ENCODE measurements at regions of chr7 and their contacts with region 1.

Region 1: GRCh38 chr7:139602143-139602722 is 78.7 kb downstream of the CLEC2L start:
- DNase-seq: no peak
- ATAC-seq: peak; percentile 83
- H3K4me3 Mint-ChIP-seq: no peak overlapping the region
- H3K27ac Mint-ChIP-seq: no peak overlapping the region
- H3K4me1 Mint-ChIP-seq: no peaks in the 10 kb centered on the region
- H3K27me3 Mint-ChIP-seq: no peaks in the 10 kb centered on the region

Region 2: DNA sequence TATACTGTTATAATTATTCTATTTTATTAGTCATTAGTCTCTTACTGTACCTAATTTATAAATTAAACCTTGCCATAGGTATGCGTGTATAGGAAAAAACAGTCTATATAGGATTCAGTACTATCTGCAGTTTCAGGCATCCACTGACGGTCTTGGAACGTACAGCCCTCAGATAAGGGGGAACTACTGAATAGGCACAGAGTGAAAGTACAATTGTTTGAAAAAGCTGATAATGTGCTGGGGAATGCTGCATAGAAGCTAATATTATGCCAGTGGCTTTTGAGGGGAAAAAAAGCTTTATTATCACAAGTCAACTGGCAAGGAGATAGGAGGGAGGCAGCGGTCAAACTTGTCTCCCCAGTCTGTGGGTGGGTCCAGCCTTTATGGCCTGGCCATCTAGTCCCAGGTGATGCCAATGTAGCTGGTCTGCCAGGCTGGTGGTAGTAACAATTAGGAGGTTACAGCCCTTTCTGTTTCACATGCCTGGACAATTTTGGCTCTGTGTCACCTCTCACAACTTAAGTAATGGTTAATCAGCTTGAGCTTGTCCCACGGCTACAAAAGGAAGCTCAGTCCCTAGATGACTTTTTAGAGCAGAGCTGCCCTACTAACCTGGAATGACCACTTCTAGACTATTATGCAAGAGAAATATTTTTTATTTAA is 269.4 kb before region 1 on chr7:
- CTCF ChIA-PET with region 1: no interaction called
- POLR2A ChIA-PET with region 1: no interaction called
- intact Hi-C with region 1: no loop called
- DNase-seq: no peak
- ATAC-seq: no peak
- H3K4me3 Mint-ChIP-seq: no peak overlapping the region
- H3K27ac Mint-ChIP-seq: no peak overlapping the region
- H3K4me1 Mint-ChIP-seq: peaks cover 13% of the 10 kb centered on the region
- H3K27me3 Mint-ChIP-seq: no peaks in the 10 kb centered on the region

Region 3: GRCh38 chr7:139393621-139394211 is 208.5 kb before region 1 on chr7:
- CTCF ChIA-PET with region 1: no interaction called
- POLR2A ChIA-PET with region 1: no interaction called
- intact Hi-C with region 1: no loop called
- DNase-seq: no peak
- ATAC-seq: peak; percentile 65
- H3K4me3 Mint-ChIP-seq: no peak overlapping the region
- H3K27ac Mint-ChIP-seq: no peak overlapping the region
- H3K4me1 Mint-ChIP-seq: peaks cover 46% of the 10 kb centered on the region
- H3K27me3 Mint-ChIP-seq: no peaks in the 10 kb centered on the region

Region 4: DNA sequence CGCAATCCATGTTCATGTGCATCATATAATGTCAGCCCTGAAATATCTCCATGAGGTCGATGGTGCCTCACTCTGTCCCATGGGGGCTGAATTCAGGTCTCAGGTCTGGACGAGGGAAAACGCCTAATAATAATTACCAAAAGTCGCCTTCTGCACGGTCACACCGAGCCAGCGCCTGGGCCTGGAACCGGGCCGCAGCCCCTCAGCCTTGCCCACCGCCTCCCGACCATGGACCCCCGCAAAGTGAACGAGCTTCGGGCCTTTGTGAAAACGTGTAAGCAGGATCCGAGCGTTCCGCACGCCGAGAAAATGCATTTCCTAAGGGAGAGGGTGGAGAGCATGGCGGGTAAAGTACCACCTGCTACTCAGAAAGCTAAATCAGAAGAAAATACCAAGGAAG is 100.0 kb before region 1 on chr7:
- CTCF ChIA-PET with region 1: interaction called, 11 read pairs
- POLR2A ChIA-PET with region 1: no interaction called
- intact Hi-C with region 1: no loop called
- DNase-seq: no peak
- ATAC-seq: no peak
- H3K4me3 Mint-ChIP-seq: no peak overlapping the region
- H3K27ac Mint-ChIP-seq: no peak overlapping the region
- H3K4me1 Mint-ChIP-seq: peaks cover 4% of the 10 kb centered on the region
- H3K27me3 Mint-ChIP-seq: peaks cover 2% of the 10 kb centered on the region

Region 5: GRCh38 chr7:139591550-139592195 is 10.6 kb before region 1 on chr7:
- CTCF ChIA-PET with region 1: interaction called, 11 read pairs
- POLR2A ChIA-PET with region 1: no interaction called
- intact Hi-C with region 1: no loop called
- DNase-seq: no peak
- ATAC-seq: no peak
- H3K4me3 Mint-ChIP-seq: no peak overlapping the region
- H3K27ac Mint-ChIP-seq: no peak overlapping the region
- H3K4me1 Mint-ChIP-seq: peaks cover 3% of the 10 kb centered on the region
- H3K27me3 Mint-ChIP-seq: no peaks in the 10 kb centered on the region

Region 6: DNA sequence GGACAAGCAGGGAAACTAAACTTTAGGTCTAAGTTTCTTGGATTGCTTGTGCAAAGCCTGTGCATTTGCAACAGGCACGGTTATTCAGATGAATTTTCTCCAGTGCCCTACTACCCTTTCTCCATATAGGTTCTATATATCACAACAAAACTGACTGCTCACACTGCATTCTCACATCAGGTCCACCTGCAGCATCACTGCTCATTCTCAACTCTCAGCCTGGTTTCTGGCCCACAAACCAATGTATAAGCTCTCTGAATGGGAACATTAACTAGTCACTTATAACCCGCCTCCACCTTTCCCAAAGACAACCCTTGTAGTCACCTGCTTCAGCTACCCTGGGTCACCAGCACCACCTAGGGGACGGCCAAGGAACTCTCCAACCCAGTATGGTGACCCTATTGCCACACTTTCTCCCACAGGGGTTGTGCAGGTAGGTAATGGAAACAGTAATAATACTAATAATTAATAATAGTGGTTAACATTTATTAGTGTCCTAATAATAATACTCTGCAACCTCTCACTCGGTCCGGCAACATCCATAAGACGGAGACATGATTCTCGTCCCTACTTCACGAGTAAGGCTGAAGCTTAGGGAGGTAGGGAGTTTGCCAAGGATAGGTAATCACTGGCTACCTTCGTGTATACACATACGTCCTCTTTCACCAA is 18.6 kb after region 1 on chr7:
- CTCF ChIA-PET with region 1: interaction called, 56 read pairs
- POLR2A ChIA-PET with region 1: no interaction called
- intact Hi-C with region 1: no loop called
- DNase-seq: peak; percentile 82
- ATAC-seq: peak; percentile 89
- H3K4me3 Mint-ChIP-seq: no peak overlapping the region
- H3K27ac Mint-ChIP-seq: no peak overlapping the region
- H3K4me1 Mint-ChIP-seq: peaks cover 27% of the 10 kb centered on the region
- H3K27me3 Mint-ChIP-seq: no peaks in the 10 kb centered on the region

Region 7: DNA sequence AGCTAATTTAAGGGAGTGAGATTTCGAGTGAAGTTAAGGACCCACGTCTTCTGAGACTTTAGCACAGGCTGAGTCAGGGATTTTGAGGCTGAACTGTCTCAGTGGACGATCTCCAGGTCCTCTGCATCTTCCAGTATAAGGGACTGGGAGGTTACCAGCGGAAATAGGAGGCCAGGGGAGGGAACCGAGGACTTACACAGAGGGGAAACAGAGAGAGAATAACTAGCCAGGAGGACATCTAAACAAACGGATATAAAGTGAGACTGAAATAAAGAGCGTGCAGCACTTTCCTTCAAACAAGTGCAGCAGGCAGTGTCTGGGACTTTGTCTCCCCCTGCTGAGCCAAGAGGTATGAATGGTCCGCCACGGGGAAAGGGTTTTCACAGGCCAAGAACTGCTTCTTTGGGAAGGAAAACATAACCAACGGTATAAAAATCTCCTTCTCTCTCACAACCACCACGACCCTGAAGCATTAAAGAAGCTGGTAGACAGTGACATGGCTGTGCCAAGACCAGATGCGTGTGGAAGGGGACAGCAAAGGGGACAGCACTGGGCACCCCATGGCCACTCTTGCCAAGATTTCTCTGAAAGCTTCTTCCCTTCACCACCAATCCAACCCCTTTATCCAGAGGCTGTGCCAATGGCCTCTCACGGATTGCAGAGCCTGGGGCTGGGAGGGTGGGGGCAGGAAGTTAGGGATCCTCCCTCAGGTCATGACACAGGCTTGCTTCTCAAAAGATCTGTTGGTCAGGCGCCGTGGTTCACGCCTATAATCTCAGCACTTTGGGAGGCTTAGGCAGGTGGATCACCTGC is 724.1 kb after region 1 on chr7:
- CTCF ChIA-PET with region 1: no interaction called
- POLR2A ChIA-PET with region 1: no interaction called
- intact Hi-C with region 1: loop called in 1 of 2 experiments (anchors 10 kb)
- DNase-seq: peak; percentile 72
- ATAC-seq: peak; percentile 88
- H3K4me3 Mint-ChIP-seq: no peak overlapping the region
- H3K27ac Mint-ChIP-seq: peak overlapping the region; percentile 44
- H3K4me1 Mint-ChIP-seq: no peaks in the 10 kb centered on the region
- H3K27me3 Mint-ChIP-seq: no peaks in the 10 kb centered on the region

Measured in activated CD4-positive, alpha-beta T cell treated with anti-CD3 and anti-CD28 coated beads for 36 hours (primary cell).